CD8-positive, alpha-beta T cell (primary cell): ENCODE measurements at regions of chr12 and their contacts with region 1.

Region 1: DNA sequence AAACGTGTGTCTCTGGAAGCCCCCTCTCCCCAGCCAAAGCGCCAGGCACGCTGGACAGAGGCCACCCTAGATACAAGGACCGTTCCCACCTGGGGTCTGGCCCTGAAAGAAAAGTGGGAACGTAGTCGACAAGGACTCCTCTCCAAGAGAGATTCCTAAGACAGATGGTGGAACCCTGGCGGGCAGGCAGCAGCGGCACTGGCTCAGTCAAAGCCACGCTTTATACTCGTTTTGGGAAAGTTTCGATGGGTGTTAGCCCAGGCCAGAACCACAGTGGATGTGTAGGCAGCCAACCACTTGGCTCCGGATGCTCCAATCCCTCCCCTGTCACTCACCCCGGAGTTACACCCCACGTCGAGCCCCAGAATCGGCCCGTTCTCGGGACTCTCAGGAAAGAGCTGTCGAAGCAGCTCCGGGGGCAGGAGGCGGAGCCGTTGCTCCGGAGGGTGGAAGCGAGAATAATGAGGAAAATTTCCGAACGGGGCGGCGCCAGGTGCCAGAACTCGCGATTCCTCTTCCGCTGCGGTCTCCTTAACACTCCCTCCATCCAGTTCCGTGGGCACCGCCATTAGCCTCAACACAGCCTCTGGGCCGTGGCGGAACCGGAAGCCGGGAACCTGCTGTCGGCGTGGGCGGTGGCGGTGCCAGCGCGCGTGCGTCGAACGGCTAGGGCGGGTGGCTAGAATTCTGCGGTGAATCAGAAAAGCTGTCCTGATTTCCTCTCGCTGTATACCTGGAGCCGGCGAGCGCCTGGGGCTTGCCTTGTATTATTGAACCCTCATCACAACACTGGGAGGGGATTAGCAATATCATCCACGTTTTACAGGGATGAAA is at the start of gene BCDIN3D:
- DNase-seq: peak; percentile 77 to 96 (median 92)
- ATAC-seq: peak; percentile 91
- H3K4me3 ChIP-seq: peak within 1 kb of the TSS; percentile 87 to 91
- H3K4me3 Mint-ChIP-seq: peak within 1 kb of the TSS; percentile 94
- H3K27ac ChIP-seq: peak within 1 kb of the TSS; percentile 71 to 77
- H3K27ac Mint-ChIP-seq: peak within 1 kb of the TSS; percentile 98
- H3K4me1 ChIP-seq: peaks cover 25% of the 10 kb centered on the region
- H3K4me1 Mint-ChIP-seq: peaks cover 33% of the 10 kb centered on the region
- H3K27me3 ChIP-seq: no peaks in the 10 kb centered on the region
- H3K27me3 Mint-ChIP-seq: no peaks in the 10 kb centered on the region
- CTCF ChIP-seq: no peak
- total RNA-seq, gene BCDIN3D: 4.2 to 5.9 TPM

Region 2: DNA sequence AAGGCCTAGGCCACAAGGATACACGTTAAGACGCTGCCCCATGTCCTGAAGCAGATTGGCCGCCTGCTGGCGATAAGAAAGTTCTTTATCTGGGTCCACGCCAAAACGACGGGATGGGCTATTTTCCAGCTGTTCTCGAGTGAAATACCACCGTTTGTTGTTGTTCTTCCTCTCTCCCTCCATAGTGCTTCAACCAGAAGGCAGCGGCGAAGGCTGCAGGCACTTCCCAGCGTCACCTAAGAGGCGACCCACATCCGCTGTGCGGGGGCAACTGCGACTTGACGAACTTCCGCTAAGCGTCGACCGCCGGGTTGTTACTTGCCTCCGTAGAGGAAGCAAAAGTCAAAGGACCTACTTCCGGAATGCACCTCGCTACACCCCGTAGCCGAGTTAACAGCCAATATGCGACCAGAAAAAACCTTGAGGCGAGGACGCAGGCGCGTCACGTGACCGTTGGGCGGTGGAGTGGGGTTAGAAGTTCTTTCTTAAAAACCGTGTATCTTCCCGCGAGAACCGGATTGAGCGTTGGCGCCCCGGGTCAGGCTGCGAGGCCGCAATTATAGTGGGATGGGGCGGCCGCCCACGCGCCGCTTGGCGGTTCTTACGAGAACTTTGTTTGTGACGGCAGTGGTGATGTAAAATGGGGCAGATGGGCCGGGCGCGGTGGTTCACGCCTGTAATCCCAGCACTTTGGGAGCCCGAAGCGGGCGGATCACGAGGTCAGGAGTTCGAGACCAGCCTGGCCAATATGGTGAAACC is 1126.1 kb before region 1 on chr12 and contains the start of gene CCNT1:
- CTCF ChIA-PET with region 1: no interaction called
- POLR2A ChIA-PET with region 1: no interaction called
- intact Hi-C with region 1: loop called in 1 of 2 experiments (anchors 5 kb)
- DNase-seq: peak; percentile 96 to 100 (median 97)
- ATAC-seq: peak; percentile 86
- H3K4me3 ChIP-seq: peak within 1 kb of the TSS; percentile 84
- H3K4me3 Mint-ChIP-seq: peak within 1 kb of the TSS; percentile 92
- H3K27ac ChIP-seq: peak within 1 kb of the TSS; percentile 96 to 99
- H3K27ac Mint-ChIP-seq: peak within 1 kb of the TSS; percentile 98
- H3K4me1 ChIP-seq: peaks cover 30% of the 10 kb centered on the region
- H3K4me1 Mint-ChIP-seq: peaks cover 40% of the 10 kb centered on the region
- H3K27me3 ChIP-seq: no peaks in the 10 kb centered on the region
- H3K27me3 Mint-ChIP-seq: no peaks in the 10 kb centered on the region
- CTCF ChIP-seq: no peak
- total RNA-seq, gene CCNT1: 127 to 132 TPM

Region 3: DNA sequence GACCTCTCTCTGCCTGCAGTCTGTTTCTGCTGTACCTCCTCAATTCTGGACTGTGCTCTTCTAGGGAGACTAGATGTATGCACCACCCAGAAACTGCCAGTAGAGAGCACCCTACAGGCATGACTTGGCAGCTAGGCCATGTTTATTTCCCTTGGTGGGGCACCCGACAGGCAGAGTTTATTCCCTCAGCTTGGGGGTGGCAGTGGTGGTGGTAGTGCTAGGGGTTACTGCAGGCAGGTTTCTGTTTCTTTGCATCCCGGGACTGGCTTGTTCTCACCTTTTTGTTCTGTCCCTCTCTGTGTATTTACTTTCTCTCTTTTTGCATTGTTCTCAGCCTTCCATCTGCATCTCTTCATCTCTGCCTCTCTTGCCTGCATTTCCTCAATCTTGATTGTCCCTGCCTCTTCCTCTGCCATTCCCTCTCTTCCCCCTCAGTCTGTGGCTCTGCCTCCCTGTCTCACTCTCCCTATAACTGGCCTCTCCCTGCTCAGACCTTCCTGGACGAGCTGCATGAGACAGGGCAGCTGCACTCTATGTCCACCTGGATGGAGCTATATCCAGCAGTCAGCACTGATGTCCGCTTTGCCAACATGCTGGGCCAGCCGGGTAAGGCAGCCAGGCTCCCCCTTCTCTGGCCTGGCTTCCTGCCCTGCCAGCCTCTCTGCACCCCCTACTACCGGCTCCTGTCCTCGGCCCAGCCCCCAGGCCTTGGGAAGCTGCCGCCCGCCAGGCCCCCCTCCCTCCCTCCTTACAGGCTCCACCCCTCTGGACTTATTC is 205.6 kb before region 1 on chr12:
- CTCF ChIA-PET with region 1: interaction called, 15 read pairs
- POLR2A ChIA-PET with region 1: no interaction called
- intact Hi-C with region 1: loop called in 1 of 2 experiments (anchors 5 kb)
- DNase-seq: peak in 8 of 9 experiments; percentile 39 to 76 (median 62)
- ATAC-seq: peak; percentile 99
- H3K4me3 ChIP-seq: no peak overlapping the region
- H3K4me3 Mint-ChIP-seq: no peak overlapping the region
- H3K27ac ChIP-seq: no peak overlapping the region
- H3K27ac Mint-ChIP-seq: peak overlapping the region; percentile 46
- H3K4me1 ChIP-seq: peaks cover 21% of the 10 kb centered on the region
- H3K4me1 Mint-ChIP-seq: peaks cover 29% of the 10 kb centered on the region
- H3K27me3 ChIP-seq: no peaks in the 10 kb centered on the region
- H3K27me3 Mint-ChIP-seq: no peaks in the 10 kb centered on the region
- CTCF ChIP-seq: peak; percentile 65

Region 4: GRCh38 chr12:49651855-49652254 is 190.9 kb before region 1 on chr12:
- CTCF ChIA-PET with region 1: no interaction called
- POLR2A ChIA-PET with region 1: no interaction called
- intact Hi-C with region 1: no loop called
- DNase-seq: no peak
- ATAC-seq: no peak
- H3K4me3 ChIP-seq: no peak overlapping the region
- H3K4me3 Mint-ChIP-seq: no peak overlapping the region
- H3K27ac ChIP-seq: no peak overlapping the region
- H3K27ac Mint-ChIP-seq: peak overlapping the region; percentile 41
- H3K4me1 ChIP-seq: peaks cover 15% of the 10 kb centered on the region
- H3K4me1 Mint-ChIP-seq: peaks cover 32% of the 10 kb centered on the region
- H3K27me3 ChIP-seq: no peaks in the 10 kb centered on the region
- H3K27me3 Mint-ChIP-seq: no peaks in the 10 kb centered on the region
- CTCF ChIP-seq: no peak

Region 5: DNA sequence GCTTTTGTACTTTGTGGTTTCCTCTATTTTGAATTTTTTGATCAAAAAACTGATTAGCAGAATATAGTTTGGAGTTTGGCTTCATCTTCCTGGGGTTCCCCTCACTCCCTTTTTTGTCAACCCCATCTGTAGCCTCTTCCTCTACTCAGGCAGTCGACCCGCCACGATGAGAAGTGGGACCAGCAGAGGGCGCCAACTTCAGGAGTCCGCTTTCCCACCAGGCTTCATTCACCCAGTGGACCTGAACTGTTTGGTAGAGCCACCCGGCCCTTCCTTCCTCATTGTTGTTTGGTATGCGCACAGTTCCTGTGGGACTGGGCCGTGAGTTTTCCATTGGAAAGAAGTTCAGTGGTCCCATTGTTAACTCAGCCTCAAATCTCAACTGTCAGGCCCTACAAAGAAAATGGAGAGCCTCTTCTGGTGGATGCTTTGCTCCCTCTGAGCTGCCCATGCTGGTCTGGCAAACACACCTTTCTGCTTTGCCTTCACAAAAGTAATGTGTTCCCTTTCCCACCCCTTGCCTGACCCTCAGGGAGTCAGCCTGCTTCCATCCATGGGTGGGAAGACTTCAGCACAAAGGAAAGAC is 79.6 kb before region 1 on chr12:
- CTCF ChIA-PET with region 1: interaction called, 85 read pairs
- POLR2A ChIA-PET with region 1: interaction called, 3 read pairs
- intact Hi-C with region 1: loop called (anchors 1 to 2 kb)
- DNase-seq: peak; percentile 58 to 87 (median 83)
- ATAC-seq: peak; percentile 82
- H3K4me3 ChIP-seq: no peak overlapping the region
- H3K4me3 Mint-ChIP-seq: peak overlapping the region; percentile 37
- H3K27ac ChIP-seq: peak overlapping the region in 1 of 2 experiments; percentile 69
- H3K27ac Mint-ChIP-seq: peak overlapping the region; percentile 83
- H3K4me1 ChIP-seq: peaks cover 51% of the 10 kb centered on the region
- H3K4me1 Mint-ChIP-seq: peaks cover 59% of the 10 kb centered on the region
- H3K27me3 ChIP-seq: no peaks in the 10 kb centered on the region
- H3K27me3 Mint-ChIP-seq: no peaks in the 10 kb centered on the region
- CTCF ChIP-seq: peak; percentile 85

Region 6: GRCh38 chr12:49821373-49822287 is 21.1 kb before region 1 on chr12:
- CTCF ChIA-PET with region 1: interaction called, 45 read pairs
- POLR2A ChIA-PET with region 1: interaction called, 9 read pairs
- intact Hi-C with region 1: no loop called
- DNase-seq: no peak
- ATAC-seq: no peak
- H3K4me3 ChIP-seq: no peak overlapping the region
- H3K4me3 Mint-ChIP-seq: peak overlapping the region; percentile 11
- H3K27ac ChIP-seq: no peak overlapping the region
- H3K27ac Mint-ChIP-seq: peak overlapping the region; percentile 78
- H3K4me1 ChIP-seq: peaks cover 14% of the 10 kb centered on the region
- H3K4me1 Mint-ChIP-seq: peaks cover 47% of the 10 kb centered on the region
- H3K27me3 ChIP-seq: no peaks in the 10 kb centered on the region
- H3K27me3 Mint-ChIP-seq: no peaks in the 10 kb centered on the region
- CTCF ChIP-seq: no peak

Region 7: DNA sequence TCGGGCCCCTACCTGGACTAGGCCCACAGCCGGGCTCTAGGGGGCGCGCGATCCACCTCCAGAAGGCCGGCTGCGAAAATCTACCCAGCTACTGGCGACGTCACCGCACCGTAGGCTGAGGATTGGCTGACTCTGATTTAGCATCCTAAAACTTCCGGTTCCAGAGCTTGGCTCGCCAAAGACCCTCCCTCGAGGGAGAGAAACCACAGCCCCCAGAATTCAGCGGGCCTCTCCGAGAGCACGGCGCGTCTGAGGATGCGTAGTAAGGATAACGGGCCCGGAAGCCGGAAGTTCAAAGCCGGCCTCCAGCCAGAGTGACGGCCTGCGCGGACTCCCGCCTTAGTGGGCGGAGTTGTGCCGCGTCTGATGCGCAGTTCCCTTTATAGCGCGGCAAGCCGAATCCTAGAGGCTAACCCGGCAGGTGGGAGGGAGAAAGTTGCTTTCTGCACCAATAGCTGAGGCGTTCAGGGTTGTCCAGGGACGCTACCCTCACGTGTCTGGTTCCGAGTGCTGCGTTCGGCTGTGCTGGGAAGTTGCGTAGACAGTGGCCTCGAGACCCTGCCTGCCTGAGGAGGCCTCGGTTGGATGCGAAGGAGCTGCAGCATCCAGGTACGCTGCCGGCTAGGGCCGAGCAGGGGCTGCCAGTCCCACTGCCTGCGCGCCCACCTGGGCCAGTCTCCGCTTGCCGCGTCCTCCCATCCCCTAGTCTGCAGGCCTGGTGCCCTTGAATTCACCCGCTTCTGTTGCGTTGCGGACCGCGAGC is 269.1 kb after region 1 on chr12 and contains the start of gene COX14:
- CTCF ChIA-PET with region 1: no interaction called
- POLR2A ChIA-PET with region 1: no interaction called
- intact Hi-C with region 1: loop called in 1 of 2 experiments (anchors 5 kb)
- DNase-seq: peak; percentile 98 to 100 (median 99)
- ATAC-seq: peak; percentile 82
- H3K4me3 ChIP-seq: peak within 1 kb of the TSS; percentile 88 to 98
- H3K4me3 Mint-ChIP-seq: peak within 1 kb of the TSS; percentile 99
- H3K27ac ChIP-seq: peak within 1 kb of the TSS; percentile 97 to 98
- H3K27ac Mint-ChIP-seq: peak within 1 kb of the TSS; percentile 95
- H3K4me1 ChIP-seq: peaks cover 36% of the 10 kb centered on the region
- H3K4me1 Mint-ChIP-seq: peaks cover 35% of the 10 kb centered on the region
- H3K27me3 ChIP-seq: no peaks in the 10 kb centered on the region
- H3K27me3 Mint-ChIP-seq: no peaks in the 10 kb centered on the region
- CTCF ChIP-seq: peak; percentile 97
- total RNA-seq, gene COX14: 42.2 to 43.3 TPM